Left lung (tissue), 14 donors: ENCODE measurements at regions of chr11 and their contacts with region 1.

Region 1: DNA sequence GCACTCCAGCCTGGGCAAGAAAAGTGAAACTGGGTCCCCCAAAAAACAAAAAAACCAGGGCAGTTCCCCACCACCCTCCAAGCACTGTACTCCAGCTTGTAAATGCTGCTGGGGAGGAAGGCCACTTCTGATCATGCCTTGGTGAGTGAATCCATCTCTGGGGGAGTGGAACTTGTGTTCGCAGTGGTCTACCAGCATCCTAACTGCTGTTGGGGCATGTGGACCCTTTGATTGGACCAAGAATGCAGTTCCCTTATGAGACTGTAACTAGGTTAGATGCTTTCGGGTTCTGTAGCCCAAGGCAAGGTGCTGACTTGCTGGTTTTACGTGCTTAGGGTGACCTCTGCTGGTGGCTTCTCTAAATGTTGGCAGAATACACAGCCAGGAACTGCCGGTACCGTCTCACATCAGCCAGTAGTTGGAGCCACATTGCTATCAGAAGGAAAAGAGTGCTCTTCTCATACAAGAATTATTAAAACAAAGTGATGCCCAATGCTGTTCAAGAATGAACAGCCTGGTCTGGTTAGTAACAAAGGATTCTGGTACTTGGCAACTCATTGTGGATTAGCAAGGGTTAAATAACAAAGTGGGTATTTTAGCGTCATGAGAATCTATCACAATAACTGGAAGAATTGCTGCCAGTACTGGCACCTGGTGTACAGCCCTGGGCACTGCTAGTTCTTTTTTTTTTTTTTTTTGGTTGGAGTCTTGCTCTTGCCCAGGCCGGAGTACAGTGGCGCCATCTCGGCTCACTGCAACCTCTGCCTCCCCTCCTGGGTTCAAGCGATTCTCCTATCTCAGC is 13.0 kb downstream of the EIF1AD start:
- DNase-seq: peak in 3 of 4 donors; percentile 88 to 95 (median 91)
- ATAC-seq: peak; percentile 100
- H3K4me3 ChIP-seq: no peak overlapping the region
- H3K27ac ChIP-seq: peak overlapping the region in 1 of 2 donors; percentile 53
- H3K4me1 ChIP-seq: peaks cover 0 to 6% of the 10 kb centered on the region in 2 donors
- H3K27me3 ChIP-seq: no peaks in the 10 kb centered on the region
- CTCF ChIP-seq: peak; percentile 81 to 93

Region 2: GRCh38 chr11:65888163-65888814 is 100.7 kb before region 1 on chr11 and contains the start of gene FIBP:
- intact Hi-C with region 1: loop called in 1 of 2 experiments (anchors 10 kb)
- DNase-seq: peak; percentile 96 to 99 (median 98)
- ATAC-seq: peak; percentile 86
- H3K4me3 ChIP-seq: peak within 1 kb of the TSS; percentile 73 to 87
- H3K27ac ChIP-seq: peak within 1 kb of the TSS; percentile 95 to 97
- H3K4me1 ChIP-seq: peaks cover 20 to 74% of the 10 kb centered on the region in 2 donors
- H3K27me3 ChIP-seq: no peaks in the 10 kb centered on the region
- CTCF ChIP-seq: peak; percentile 64 to 95
- polyA plus RNA-seq, gene FIBP: 72.3 to 83.0 (median 77.7) TPM